ENCODE measurements at regions of chr17 and their contacts with region 1.

Region 1: GRCh38 chr17:17001874-17002520 is 30.1 kb upstream of the TNFRSF13B start:
- DNase-seq: peak; percentile 90 to 92
- H3K4me3 ChIP-seq: no peak overlapping the region
- H3K27ac ChIP-seq: no peak overlapping the region
- H3K4me1 ChIP-seq: peaks cover 5 to 11% (median 9%) of the 10 kb centered on the region in 4 donors
- H3K27me3 ChIP-seq: no peaks in the 10 kb centered on the region
- CTCF ChIP-seq: peak in 5 of 7 experiments; percentile 89 to 97 (median 96)
- EP300 ChIP-seq: no peak
- POLR2A ChIP-seq: no peak

Region 2: DNA sequence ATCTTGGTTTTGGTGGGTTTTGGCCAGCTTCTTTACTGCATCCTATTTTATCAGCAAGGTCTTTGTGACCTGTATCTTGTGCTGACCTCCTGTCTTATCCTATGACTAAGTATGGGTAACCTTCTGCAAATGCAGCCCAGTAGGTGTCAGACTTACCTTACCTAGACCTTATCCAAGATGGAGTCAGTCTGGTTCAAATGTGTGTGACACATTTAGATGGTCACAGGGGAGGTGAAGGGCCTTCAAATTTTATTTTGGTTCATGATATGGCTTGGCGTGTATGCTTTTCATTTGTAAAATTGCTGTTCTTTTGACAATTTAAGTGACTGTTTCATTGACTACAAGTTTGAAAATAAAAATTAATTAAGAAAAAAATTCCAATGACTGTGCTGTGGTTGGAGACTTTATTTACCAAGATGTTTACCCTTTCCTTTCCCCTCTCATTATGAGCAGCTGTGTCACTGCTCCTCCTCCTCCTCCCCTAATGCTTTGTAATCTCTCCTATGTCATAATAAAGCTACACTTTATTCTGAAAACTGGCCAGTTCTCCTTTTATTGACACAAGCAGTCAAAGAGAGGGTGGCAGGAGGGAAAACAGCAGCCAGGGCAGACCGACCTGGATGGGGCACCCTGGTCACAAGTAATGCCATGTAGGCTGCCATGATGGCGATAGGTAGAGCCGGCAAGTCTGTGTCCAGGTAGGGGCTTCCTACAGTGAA is 79.5 kb before region 1 on chr17:
- intact Hi-C with region 1: no loop called
- DNase-seq: no peak
- H3K4me3 ChIP-seq: no peak overlapping the region
- H3K27ac ChIP-seq: no peak overlapping the region
- H3K4me1 ChIP-seq: no peaks in the 10 kb centered on the region
- H3K27me3 ChIP-seq: no peaks in the 10 kb centered on the region
- CTCF ChIP-seq: no peak
- EP300 ChIP-seq: no peak
- POLR2A ChIP-seq: no peak

Region 3: GRCh38 chr17:17141860-17142552 is 140.0 kb after region 1 on chr17:
- intact Hi-C with region 1: loop called (anchors 10 kb)
- DNase-seq: peak in 1 of 2 donors; percentile 75
- H3K4me3 ChIP-seq: no peak overlapping the region
- H3K27ac ChIP-seq: peak overlapping the region in 1 of 5 donors; percentile 10
- H3K4me1 ChIP-seq: peaks cover 0 to 21% (median 7%) of the 10 kb centered on the region in 4 donors
- H3K27me3 ChIP-seq: no peaks in the 10 kb centered on the region
- CTCF ChIP-seq: peak in 5 of 7 experiments; percentile 22 to 74 (median 57)
- EP300 ChIP-seq: no peak
- POLR2A ChIP-seq: no peak

Region 4: DNA sequence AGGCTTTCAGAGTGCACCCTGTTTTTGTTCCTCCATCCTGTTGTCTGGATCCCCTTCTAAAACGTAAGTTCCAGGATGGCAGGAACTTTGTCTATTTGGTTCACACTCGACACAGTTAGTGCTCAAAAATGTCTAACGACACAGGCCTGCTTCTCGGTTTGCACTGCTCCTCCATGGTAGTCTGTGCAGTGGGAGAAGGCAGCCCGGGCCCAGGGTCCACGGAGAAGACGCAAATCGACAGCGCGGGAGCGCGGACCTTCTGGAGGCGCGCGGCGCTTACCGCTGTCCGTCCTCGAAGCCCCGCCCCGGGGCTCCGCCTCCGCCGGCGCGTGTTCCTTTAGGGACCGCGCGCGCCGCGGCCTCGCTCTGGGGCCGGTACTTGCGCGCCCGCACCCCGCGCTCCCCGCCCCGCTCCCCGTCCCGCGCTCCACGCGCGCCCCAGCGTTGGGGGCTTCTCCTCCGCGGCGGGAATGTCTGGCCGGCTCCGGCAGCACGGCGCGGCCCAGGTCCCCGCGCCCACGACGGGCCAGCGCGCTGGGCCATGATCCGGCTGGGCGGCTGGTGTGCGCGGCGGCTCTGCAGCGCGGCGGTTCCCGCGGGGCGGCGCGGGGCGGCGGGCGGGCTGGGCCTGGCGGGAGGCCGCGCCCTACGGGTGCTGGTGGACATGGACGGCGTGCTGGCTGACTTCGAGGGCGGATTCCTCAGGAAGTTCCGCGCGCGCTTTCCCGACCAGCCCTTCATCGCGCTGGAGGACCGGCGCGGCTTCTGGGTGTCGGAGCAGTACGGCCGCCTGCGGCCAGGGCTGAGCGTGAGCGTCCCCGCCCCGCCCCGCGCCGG is 301.2 kb after region 1 on chr17 and contains the start of gene NT5M:
- intact Hi-C with region 1: loop called (anchors 10 kb)
- DNase-seq: peak; percentile 79 to 92
- H3K4me3 ChIP-seq: peak within 1 kb of the TSS; percentile 57 to 73 (median 60)
- H3K27ac ChIP-seq: peak within 1 kb of the TSS; percentile 66 to 82 (median 72)
- H3K4me1 ChIP-seq: peaks cover 9 to 38% (median 21%) of the 10 kb centered on the region in 4 donors
- H3K27me3 ChIP-seq: no peaks in the 10 kb centered on the region
- CTCF ChIP-seq: no peak
- EP300 ChIP-seq: no peak
- POLR2A ChIP-seq: no peak
- total RNA-seq, gene NT5M: 0.72 to 6.6 (median 2.2) TPM in 3 of 5 donors, not detected in the others

Measured in stomach (tissue), 19 donors.